AG04449 (cell line): ENCODE measurements at regions of chr6 and their contacts with region 1.

Region 1: DNA sequence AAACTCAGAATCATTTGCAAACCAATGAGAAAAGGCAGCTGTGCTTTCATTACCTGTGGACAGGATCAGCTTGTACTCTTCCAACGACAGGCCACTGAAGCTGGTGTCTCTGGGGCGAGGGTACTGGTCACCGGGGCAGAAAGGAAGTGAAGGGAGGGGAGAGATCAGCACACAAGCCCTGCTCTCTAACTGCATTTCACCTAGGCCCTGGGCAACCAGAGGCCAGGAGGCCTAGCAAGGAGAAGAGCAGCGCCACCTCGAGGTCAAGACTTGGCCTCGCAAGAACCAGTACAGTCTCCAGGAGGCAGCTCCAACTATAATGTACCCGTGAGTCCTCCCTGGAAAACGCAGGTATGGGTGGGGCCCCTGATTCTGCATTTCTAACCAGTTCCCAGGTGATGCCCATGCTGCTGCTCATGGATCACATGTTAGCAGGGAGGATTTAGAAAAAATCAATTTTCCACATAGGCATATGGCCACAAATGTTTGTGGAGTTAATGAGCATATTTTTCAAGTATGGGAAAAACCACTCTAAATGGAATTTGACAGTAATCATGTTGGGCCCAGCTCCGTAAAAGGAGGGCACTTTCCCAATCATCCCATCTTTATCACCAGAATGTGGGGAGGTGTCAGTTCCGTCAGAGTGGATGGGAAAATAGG is 11.0 kb downstream of the UQCC2 start:
- DNase-seq: peak; percentile 14
- H3K4me3 ChIP-seq: no peak overlapping the region
- CTCF ChIP-seq: peak; percentile 85

Region 2: DNA sequence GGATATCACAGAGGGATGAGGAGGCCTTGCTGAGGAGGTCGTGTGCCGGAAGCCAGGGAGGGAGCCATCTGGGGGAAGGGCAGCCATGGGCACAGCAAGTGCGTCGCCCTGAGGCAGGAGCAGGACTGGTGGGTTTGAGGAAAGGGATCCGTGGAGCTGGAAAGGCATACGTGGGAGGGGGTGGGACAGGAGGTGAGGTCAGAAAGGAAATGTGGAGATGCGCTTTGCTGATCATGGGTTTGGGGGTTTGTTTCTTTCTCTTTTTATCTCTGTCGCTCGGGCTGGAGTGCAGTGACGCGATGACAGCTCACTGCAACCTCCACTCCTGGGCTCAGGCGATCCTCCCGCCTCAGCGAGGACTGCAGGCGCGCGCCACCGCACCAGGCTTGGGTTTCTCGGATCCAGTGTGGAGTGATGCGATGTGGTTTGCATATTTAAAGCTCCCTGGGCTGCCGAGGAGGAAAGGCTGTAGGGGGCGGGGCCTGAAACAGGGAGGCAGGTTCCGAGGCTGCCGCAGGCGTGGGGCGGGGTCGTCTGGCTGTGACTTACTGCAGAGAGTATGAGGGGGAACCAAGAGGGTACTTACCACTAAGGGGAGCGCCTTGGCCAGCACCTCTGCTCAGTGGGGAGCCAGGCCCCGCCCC is 108.0 kb before region 1 on chr6:
- CTCF ChIA-PET with region 1: interaction called, 539 read pairs
- POLR2A ChIA-PET with region 1: interaction called, 8 read pairs
- DNase-seq: no peak
- H3K4me3 ChIP-seq: no peak overlapping the region
- CTCF ChIP-seq: no peak

Region 3: GRCh38 chr6:33607784-33608161 is 92.7 kb before region 1 on chr6:
- CTCF ChIA-PET with region 1: interaction called, 19 read pairs
- POLR2A ChIA-PET with region 1: no interaction called
- DNase-seq: no peak
- H3K4me3 ChIP-seq: no peak overlapping the region
- CTCF ChIP-seq: peak; percentile 1

Region 4: GRCh38 chr6:33620856-33621710 is 79.4 kb before region 1 on chr6 and contains the start of gene ITPR3:
- CTCF ChIA-PET with region 1: interaction called, 14 read pairs
- POLR2A ChIA-PET with region 1: no interaction called
- DNase-seq: no peak
- H3K4me3 ChIP-seq: peak within 1 kb of the TSS; percentile 63
- CTCF ChIP-seq: no peak

Region 5: DNA sequence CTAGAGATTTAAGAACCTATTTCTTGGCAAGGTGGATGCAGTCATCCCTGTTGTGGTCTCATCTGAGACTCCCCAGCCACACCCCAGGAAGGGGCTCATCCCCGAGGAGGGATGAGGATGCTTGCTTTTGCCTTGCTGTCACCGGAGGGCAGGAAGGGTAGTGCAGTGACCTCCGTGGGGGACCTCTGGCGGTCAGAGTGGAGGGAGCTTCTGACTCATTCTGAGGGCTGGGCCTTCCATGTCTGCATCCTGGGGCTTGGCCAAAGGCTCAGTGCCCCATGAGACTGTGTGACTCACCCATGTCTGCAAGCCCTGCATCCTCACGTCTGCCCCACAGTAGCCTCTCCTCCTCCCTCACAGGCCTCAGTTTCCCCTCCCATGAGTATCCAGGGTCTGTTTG is 27.7 kb before region 1 on chr6:
- CTCF ChIA-PET with region 1: interaction called, 22 read pairs
- POLR2A ChIA-PET with region 1: no interaction called
- DNase-seq: peak; percentile 78
- H3K4me3 ChIP-seq: no peak overlapping the region
- CTCF ChIP-seq: peak; percentile 71

Region 6: DNA sequence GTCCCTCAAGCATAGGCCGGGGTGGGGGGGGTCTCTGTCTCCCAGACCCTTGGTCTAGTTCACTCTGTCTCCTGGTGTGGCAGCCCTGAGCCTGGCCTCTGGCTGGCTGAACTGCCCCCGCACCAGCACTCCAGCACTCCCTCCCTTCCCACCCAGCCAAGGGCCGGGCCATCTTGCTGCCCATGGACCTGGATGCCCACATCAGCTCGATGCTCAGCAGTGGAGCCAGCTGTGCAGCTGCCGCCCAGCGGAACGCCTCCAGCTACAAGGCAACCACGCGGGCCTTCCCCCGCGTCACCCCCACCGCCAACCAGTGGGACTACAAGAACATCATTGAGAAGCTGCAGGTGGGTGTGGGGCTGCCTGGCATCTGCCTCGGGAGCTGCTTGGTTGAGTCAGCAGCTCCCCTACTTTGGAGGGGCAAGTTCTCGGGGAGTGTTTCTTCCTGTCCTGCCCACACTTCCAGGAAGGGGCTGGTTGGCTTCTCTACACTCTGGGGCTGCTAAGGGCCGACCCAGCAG is 17.4 kb before region 1 on chr6:
- CTCF ChIA-PET with region 1: interaction called, 16 read pairs
- POLR2A ChIA-PET with region 1: no interaction called
- DNase-seq: no peak
- H3K4me3 ChIP-seq: no peak overlapping the region
- CTCF ChIP-seq: no peak

Region 7: GRCh38 chr6:33812669-33813068 is 112.1 kb after region 1 on chr6:
- CTCF ChIA-PET with region 1: no interaction called
- POLR2A ChIA-PET with region 1: no interaction called
- DNase-seq: no peak
- H3K4me3 ChIP-seq: no peak overlapping the region
- CTCF ChIP-seq: peak; percentile 63

Region 8: GRCh38 chr6:33958526-33959333 is 258.2 kb after region 1 on chr6:
- CTCF ChIA-PET with region 1: no interaction called
- POLR2A ChIA-PET with region 1: no interaction called
- DNase-seq: no peak
- H3K4me3 ChIP-seq: no peak overlapping the region
- CTCF ChIP-seq: peak; percentile 9

Region 9: GRCh38 chr6:34037151-34037550 is 336.6 kb after region 1 on chr6:
- CTCF ChIA-PET with region 1: no interaction called
- POLR2A ChIA-PET with region 1: no interaction called
- DNase-seq: no peak
- H3K4me3 ChIP-seq: no peak overlapping the region
- CTCF ChIP-seq: no peak